Activated T-helper 1 cell treated with anti-CD3 and anti-CD28 coated beads, Interleukin-12 subunit alpha, Interleukin-12 subunit beta, Interleukin-2, Interleukin-4 antibody, amounts not matched to agents 30 ng/mL and 10 ng/mL and 1 ng/mL, durations not matched to agents 14 hours and 24 hours and 36 hours (primary cell): ENCODE measurements at regions of chr13 and their contacts with region 1.

Region 1: GRCh38 chr13:30739761-30740642 is 4.7 kb downstream of the ALOX5AP start:
- DNase-seq: peak; percentile 68
- H3K4me3 Mint-ChIP-seq: peak overlapping the region; percentile 83
- H3K27ac Mint-ChIP-seq: peak overlapping the region; percentile 95
- H3K4me1 Mint-ChIP-seq: peaks cover 81% of the 10 kb centered on the region
- H3K27me3 Mint-ChIP-seq: peaks cover 2% of the 10 kb centered on the region

Region 2: GRCh38 chr13:29935309-29935981 is 804.6 kb before region 1 on chr13:
- intact Hi-C with region 1: loop called (anchors 1 kb)
- DNase-seq: peak; percentile 82
- H3K4me3 Mint-ChIP-seq: peak overlapping the region; percentile 86
- H3K27ac Mint-ChIP-seq: peak overlapping the region; percentile 95
- H3K4me1 Mint-ChIP-seq: peaks cover 69% of the 10 kb centered on the region
- H3K27me3 Mint-ChIP-seq: no peaks in the 10 kb centered on the region

Region 3: GRCh38 chr13:30371649-30372265 is 368.2 kb before region 1 on chr13:
- intact Hi-C with region 1: loop called (anchors 5 kb)
- DNase-seq: peak; percentile 65
- H3K4me3 Mint-ChIP-seq: peak overlapping the region; percentile 68
- H3K27ac Mint-ChIP-seq: peak overlapping the region; percentile 84
- H3K4me1 Mint-ChIP-seq: peaks cover 80% of the 10 kb centered on the region
- H3K27me3 Mint-ChIP-seq: no peaks in the 10 kb centered on the region

Region 4: GRCh38 chr13:30581582-30581981 is 158.4 kb before region 1 on chr13:
- intact Hi-C with region 1: no loop called
- DNase-seq: no peak
- H3K4me3 Mint-ChIP-seq: no peak overlapping the region
- H3K27ac Mint-ChIP-seq: no peak overlapping the region
- H3K4me1 Mint-ChIP-seq: peaks cover 14% of the 10 kb centered on the region
- H3K27me3 Mint-ChIP-seq: peaks cover 28% of the 10 kb centered on the region

Region 5: GRCh38 chr13:30617315-30618185 is 122.5 kb before region 1 on chr13 and contains the start of gene USPL1:
- intact Hi-C with region 1: loop called (anchors 1 kb)
- DNase-seq: peak; percentile 99
- H3K4me3 Mint-ChIP-seq: no peak within 1 kb of the TSS
- H3K27ac Mint-ChIP-seq: no peak within 1 kb of the TSS
- H3K4me1 Mint-ChIP-seq: peaks cover 12% of the 10 kb centered on the region
- H3K27me3 Mint-ChIP-seq: no peaks in the 10 kb centered on the region
- total RNA-seq, gene USPL1: 17.2 and 17.5 TPM in 2 replicates

Region 6: DNA sequence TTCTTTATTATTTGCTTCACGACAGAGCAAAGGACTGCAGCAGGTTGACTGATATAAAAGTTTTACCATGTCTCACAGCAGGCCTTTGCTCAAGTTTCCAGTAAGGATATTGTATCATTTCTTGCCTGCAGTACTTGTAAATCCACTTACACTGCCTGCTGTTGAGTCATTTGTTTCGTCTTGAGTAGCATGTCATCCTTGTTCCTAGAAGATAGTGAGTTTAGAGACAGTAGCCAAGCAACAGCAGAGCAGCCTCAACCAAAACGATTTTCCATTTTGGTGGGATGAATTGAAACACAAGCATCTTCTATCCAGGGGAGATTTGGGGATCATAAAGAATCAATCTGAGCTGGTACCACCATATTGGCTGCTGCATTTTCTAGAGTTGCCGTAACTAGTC is 28.6 kb before region 1 on chr13:
- intact Hi-C with region 1: loop called (anchors 1 kb)
- DNase-seq: no peak
- H3K4me3 Mint-ChIP-seq: peak overlapping the region; percentile 3
- H3K27ac Mint-ChIP-seq: peak overlapping the region; percentile 86
- H3K4me1 Mint-ChIP-seq: peaks cover 31% of the 10 kb centered on the region
- H3K27me3 Mint-ChIP-seq: no peaks in the 10 kb centered on the region

Region 7: GRCh38 chr13:30851697-30852096 is 111.7 kb after region 1 on chr13:
- intact Hi-C with region 1: no loop called
- DNase-seq: no peak
- H3K4me3 Mint-ChIP-seq: no peak overlapping the region
- H3K27ac Mint-ChIP-seq: no peak overlapping the region
- H3K4me1 Mint-ChIP-seq: peaks cover 10% of the 10 kb centered on the region
- H3K27me3 Mint-ChIP-seq: peaks cover 12% of the 10 kb centered on the region

Region 8: DNA sequence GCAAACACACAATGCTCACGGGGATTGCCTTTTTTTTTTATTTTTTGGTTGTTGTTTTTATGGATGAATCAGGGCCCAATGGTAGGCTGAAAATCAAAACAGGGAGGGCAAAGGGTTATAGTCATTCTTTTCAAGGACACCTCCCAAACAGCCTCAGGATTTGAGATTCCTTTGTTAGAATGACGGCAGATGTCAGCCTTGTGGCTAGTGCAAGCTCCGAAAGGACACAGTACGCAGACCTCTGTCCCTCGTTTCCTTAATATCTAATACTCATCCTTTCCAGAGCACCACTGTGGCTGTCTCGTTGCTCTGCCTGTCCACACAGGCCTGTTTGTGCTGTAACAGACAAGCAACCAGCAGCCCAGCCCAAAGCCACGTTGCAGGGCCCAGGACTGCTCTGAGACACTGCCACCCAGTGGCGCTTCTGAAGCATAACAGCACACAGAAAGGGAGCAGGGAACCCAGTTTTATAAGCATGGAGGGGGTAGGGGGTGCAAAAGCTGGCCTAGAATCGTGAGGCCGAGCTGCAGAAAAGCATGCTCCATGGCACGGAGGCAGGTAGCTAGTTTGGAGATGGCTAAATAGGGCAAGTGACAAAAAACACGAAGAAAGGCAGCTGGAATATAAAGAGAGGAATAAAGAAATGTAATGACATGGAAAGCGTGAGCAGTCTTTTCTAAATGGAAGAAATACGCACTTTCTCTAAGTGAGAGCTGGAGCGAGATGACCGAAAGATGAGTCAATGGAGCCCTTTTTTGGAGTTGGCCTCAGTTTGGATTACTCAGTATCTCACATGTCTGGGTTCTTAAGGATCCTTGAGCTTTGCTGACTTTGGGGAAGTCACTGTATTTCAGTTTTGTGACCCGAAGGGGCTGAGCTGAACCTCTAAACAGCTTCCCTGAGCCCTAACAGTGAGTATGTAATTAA is 125.4 kb after region 1 on chr13:
- intact Hi-C with region 1: loop called (anchors 5 kb)
- DNase-seq: peak; percentile 9
- H3K4me3 Mint-ChIP-seq: no peak overlapping the region
- H3K27ac Mint-ChIP-seq: no peak overlapping the region
- H3K4me1 Mint-ChIP-seq: no peaks in the 10 kb centered on the region
- H3K27me3 Mint-ChIP-seq: peaks cover 11% of the 10 kb centered on the region